ENCODE measurements at regions of chr2 and their contacts with region 1.

Region 1: DNA sequence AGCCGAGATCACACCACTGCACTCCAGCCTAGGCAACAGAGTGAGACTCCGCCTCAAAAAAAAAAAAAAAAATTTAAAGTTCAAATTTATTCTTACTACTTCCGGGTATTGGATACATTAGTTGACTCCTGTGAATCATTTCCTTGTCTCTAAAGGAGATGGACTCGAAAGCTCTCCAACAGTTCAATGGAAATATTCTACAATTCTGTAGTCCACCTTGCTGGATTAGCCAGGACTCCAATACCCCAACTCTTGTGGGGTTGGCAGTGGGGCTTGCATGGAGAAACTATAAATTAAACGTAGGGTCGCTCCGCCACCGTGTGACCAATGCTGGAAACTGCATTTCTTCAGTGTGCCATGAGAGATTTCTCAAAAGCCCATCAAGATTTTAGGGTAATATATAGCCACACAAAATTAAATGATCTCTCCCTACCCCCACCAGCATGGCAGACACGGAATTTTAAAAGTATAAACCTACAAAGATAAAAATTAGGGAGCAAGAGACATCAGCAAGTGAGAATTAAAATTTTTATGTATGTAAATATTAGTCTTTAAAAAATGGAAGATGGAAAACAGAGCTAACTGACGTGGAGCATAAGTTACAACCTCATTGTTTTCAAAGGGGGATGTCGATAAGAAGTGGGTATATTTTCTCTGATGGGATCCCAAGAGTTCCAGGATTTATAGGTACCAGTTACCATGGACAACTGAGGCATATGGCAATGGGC is 27.8 kb upstream of the GAREM2 start:
- DNase-seq: peak; percentile 70
- ATAC-seq: peak; percentile 88
- H3K4me3 ChIP-seq: no peak overlapping the region
- H3K27ac ChIP-seq: no peak overlapping the region
- H3K4me1 ChIP-seq: peaks cover 6% of the 10 kb centered on the region
- H3K27me3 ChIP-seq: no peaks in the 10 kb centered on the region
- CTCF ChIP-seq: peak; percentile 76

Region 2: DNA sequence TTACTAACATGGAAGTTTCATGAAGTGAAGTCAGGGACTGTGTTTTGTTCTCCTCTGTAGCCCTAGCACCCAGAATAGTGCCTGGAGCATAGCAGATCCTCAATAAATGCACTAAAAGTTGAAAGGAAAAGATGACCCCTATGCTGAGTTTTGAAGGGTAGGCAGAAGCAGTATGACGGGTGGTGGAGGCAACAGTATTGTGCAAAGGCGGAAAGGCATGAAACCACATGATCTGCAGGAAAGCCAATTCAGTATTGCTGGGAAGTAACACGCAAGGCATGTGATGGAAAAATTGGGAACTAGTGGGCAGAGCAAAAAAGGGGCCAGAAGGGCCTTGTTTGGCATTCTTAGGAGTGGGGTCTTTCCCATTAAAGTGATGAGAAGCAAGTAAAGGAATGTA is 494.9 kb before region 1 on chr2:
- intact Hi-C with region 1: no loop called
- DNase-seq: no peak
- ATAC-seq: peak; percentile 80
- H3K4me3 ChIP-seq: no peak overlapping the region
- H3K27ac ChIP-seq: peak overlapping the region; percentile 4
- H3K4me1 ChIP-seq: no peaks in the 10 kb centered on the region
- H3K27me3 ChIP-seq: no peaks in the 10 kb centered on the region
- CTCF ChIP-seq: no peak

Region 3: GRCh38 chr2:25808006-25808383 is 337.1 kb before region 1 on chr2:
- intact Hi-C with region 1: no loop called
- DNase-seq: no peak
- ATAC-seq: no peak
- H3K4me3 ChIP-seq: no peak overlapping the region
- H3K27ac ChIP-seq: no peak overlapping the region
- H3K4me1 ChIP-seq: no peaks in the 10 kb centered on the region
- H3K27me3 ChIP-seq: no peaks in the 10 kb centered on the region
- CTCF ChIP-seq: no peak

Region 4: GRCh38 chr2:25951071-25951547 is 194.0 kb before region 1 on chr2:
- intact Hi-C with region 1: loop called (anchors 10 kb)
- DNase-seq: peak; percentile 87
- ATAC-seq: peak; percentile 99
- H3K4me3 ChIP-seq: no peak overlapping the region
- H3K27ac ChIP-seq: no peak overlapping the region
- H3K4me1 ChIP-seq: no peaks in the 10 kb centered on the region
- H3K27me3 ChIP-seq: no peaks in the 10 kb centered on the region
- CTCF ChIP-seq: peak; percentile 96

Region 5: GRCh38 chr2:25991965-25992364 is 153.2 kb before region 1 on chr2:
- intact Hi-C with region 1: loop called (anchors 5 kb)
- DNase-seq: no peak
- ATAC-seq: peak; percentile 30
- H3K4me3 ChIP-seq: no peak overlapping the region
- H3K27ac ChIP-seq: no peak overlapping the region
- H3K4me1 ChIP-seq: no peaks in the 10 kb centered on the region
- H3K27me3 ChIP-seq: no peaks in the 10 kb centered on the region
- CTCF ChIP-seq: no peak

Measured in upper lobe of right lung (tissue), 1 donor.